Caco-2 (cell line): ENCODE measurements at regions of chr16 and their contacts with region 1.

Region 1: DNA sequence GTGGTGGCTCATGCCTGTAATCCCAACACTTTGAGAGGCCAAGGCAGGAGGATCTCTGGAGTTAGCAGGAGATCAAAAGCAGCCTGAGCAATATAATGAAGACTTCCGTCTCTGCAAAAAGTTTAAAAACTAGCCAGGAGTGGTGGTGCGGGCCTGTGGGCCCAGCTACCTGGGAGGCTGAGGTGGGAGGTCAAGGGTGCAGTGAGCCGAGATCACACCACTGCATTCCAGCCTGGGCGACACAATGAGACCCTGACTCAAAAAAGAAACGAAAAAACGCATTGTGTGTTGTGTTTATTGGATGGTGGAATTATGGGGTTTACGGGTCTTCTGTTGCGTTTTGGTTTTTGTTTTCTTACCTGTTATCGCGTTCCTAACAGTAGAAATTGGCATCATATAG is 863 bp upstream of the DDX19A start:
- DNase-seq: no peak
- H3K4me3 ChIP-seq: peak overlapping the region; percentile 94
- H3K4me3 Mint-ChIP-seq: peak overlapping the region; percentile 90
- H3K27ac Mint-ChIP-seq: peak overlapping the region; percentile 98
- H3K4me1 ChIP-seq: peaks cover 6% of the 10 kb centered on the region; the same call in 1 of the 2 replicates
- H3K4me1 Mint-ChIP-seq: peaks cover 12% of the 10 kb centered on the region
- H3K27me3 ChIP-seq: no peaks in the 10 kb centered on the region
- H3K27me3 Mint-ChIP-seq: no peaks in the 10 kb centered on the region
- CTCF ChIP-seq: no peak

Region 2: GRCh38 chr16:70289229-70290098 is 56.4 kb before region 1 on chr16 and contains the start of gene AARS1:
- CTCF ChIA-PET with region 1: no interaction called
- POLR2A ChIA-PET with region 1: interaction called, 17 read pairs
- intact Hi-C with region 1: no loop called
- DNase-seq: peak; percentile 100
- H3K4me3 ChIP-seq: peak within 1 kb of the TSS; percentile 83
- H3K4me3 Mint-ChIP-seq: peak within 1 kb of the TSS; percentile 92
- H3K27ac Mint-ChIP-seq: peak within 1 kb of the TSS; percentile 99
- H3K4me1 ChIP-seq: no peaks in the 10 kb centered on the region
- H3K4me1 Mint-ChIP-seq: no peaks in the 10 kb centered on the region
- H3K27me3 ChIP-seq: no peaks in the 10 kb centered on the region
- H3K27me3 Mint-ChIP-seq: no peaks in the 10 kb centered on the region
- CTCF ChIP-seq: peak in 1 of 2 experiments; percentile 1
- total RNA-seq, gene AARS1: 366 and 449 TPM in 2 replicates

Region 3: GRCh38 chr16:70298988-70299938 is 46.6 kb before region 1 on chr16 and contains the start of gene DDX19B:
- CTCF ChIA-PET with region 1: no interaction called
- POLR2A ChIA-PET with region 1: interaction called, 16 read pairs
- intact Hi-C with region 1: loop called (anchors 1 kb)
- DNase-seq: peak; percentile 83 to 90
- H3K4me3 ChIP-seq: peak within 1 kb of the TSS; percentile 85
- H3K4me3 Mint-ChIP-seq: peak within 1 kb of the TSS; percentile 97
- H3K27ac Mint-ChIP-seq: peak within 1 kb of the TSS; percentile 99
- H3K4me1 ChIP-seq: no peaks in the 10 kb centered on the region
- H3K4me1 Mint-ChIP-seq: peaks cover 23% of the 10 kb centered on the region
- H3K27me3 ChIP-seq: no peaks in the 10 kb centered on the region
- H3K27me3 Mint-ChIP-seq: no peaks in the 10 kb centered on the region
- CTCF ChIP-seq: no peak
- total RNA-seq, gene DDX19B: 72.4 and 74.5 TPM in 2 replicates

Region 4: DNA sequence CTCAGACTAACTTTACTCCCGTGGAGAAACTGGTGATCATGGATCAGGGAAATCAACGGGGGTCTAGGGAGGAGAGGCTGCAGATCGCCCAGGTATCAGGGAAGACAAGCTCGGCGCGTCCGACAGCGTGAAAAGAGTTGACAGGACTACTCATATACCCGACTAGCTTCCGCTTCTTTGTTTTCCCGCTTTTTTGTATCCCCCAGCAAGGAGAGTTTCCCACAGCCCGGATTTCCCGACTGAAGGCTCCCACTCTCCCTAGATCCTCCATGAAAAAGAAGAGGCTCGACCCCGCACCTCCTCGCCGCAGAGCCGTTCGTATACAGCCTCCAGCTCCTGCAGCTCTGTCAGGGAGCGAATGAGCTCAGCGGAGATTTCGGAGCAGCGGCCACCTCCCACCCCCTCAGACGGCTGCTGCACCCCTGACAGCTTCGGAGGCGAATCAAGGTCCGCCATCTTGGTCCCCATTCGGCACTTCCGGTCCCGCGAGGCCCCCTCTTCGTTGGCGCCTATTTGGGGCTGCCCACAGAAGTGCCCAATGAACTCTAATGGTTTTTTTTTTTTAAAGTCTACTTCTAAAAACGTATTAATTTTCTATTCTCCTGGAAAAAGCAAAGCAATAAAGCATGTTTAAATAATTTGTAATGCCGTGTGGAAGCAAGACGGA is 177.4 kb after region 1 on chr16 and contains the start of gene COG4:
- CTCF ChIA-PET with region 1: no interaction called
- POLR2A ChIA-PET with region 1: interaction called, 6 read pairs
- intact Hi-C with region 1: loop called (anchors 1 kb)
- DNase-seq: peak; percentile 92 to 93
- H3K4me3 ChIP-seq: peak within 1 kb of the TSS; percentile 93
- H3K4me3 Mint-ChIP-seq: peak within 1 kb of the TSS; percentile 98
- H3K27ac Mint-ChIP-seq: peak within 1 kb of the TSS; percentile 99
- H3K4me1 ChIP-seq: peaks cover 24% of the 10 kb centered on the region
- H3K4me1 Mint-ChIP-seq: peaks cover 19% of the 10 kb centered on the region
- H3K27me3 ChIP-seq: no peaks in the 10 kb centered on the region
- H3K27me3 Mint-ChIP-seq: no peaks in the 10 kb centered on the region
- CTCF ChIP-seq: no peak
- total RNA-seq, gene COG4: 88.5 and 90.3 TPM in 2 replicates